ENCODE measurements at regions of chr13 and their contacts with region 1.

Region 1: DNA sequence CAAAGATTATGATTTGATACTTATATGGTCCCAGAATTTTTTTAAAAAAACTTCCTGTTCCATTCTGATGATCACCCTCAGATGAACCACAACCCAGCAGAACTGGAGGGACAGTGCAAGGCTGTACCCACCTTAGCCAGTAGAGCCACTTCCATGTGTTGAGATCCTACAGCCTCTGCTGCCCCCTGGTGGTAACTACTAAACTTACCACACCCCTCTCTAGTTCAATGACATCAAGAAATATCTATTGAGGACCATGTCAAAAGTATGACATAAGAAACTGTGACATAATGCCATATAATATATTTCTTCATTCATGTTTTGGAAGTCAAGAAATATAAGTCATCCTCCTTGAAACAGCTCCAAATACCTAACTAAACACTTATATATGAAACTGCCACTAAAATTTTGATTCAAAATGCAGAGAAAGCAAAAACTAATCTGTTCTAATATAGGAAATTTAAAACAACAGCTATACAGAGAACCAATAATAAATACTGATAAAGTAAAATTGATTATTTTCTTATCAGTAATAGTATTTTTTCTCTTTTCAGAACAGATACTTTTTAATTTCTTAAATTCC is 412.6 kb downstream of the KCTD12 start:
- DNase-seq: peak; percentile 61 to 76 (median 65)
- ATAC-seq: peak; percentile 93 to 98 (median 96)
- H3K4me3 ChIP-seq: no peak overlapping the region
- H3K27ac ChIP-seq: peak overlapping the region in 1 of 12 donors; percentile 40
- H3K4me1 ChIP-seq: peaks cover 0 to 11% (median 2%) of the 10 kb centered on the region in 12 donors
- H3K27me3 ChIP-seq: no peaks in the 10 kb centered on the region
- CTCF ChIP-seq: peak; percentile 77 to 92 (median 87)
- POLR2A ChIP-seq: no peak

Region 2: DNA sequence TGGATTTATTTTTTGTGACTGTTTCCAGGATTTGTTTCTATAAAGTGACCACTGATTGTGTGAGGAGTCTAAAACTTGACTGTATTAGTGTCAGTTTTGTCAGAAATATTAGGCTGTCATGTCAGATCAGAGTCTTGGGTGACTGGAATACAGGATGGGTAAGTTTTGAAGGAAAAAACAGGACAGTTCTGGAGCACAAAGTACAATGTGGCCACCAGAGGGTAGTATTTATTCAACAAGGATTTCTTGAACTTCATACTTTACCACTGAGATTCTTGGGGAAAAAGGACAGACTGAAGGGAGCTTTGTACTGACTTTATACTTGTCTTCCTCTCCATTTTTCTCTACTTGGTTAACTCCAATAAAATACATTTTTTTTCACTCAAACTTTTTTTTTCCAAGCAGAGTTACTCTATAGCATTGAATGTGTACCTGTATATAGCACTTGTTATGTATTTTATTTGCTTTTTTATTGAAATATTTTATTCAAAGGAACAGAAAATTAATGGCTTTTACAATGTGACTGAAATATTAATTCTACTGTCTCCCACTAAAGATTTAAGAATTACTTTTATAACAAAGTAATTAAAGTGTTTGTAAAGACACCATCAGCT is 786.4 kb before region 1 on chr13:
- intact Hi-C with region 1: loop called in 8 of 10 experiments (anchors 5 to 10 kb)
- DNase-seq: no peak
- ATAC-seq: peak in 1 of 4 donors; percentile 28
- H3K4me3 ChIP-seq: no peak overlapping the region
- H3K27ac ChIP-seq: no peak overlapping the region
- H3K4me1 ChIP-seq: no peaks in the 10 kb centered on the region
- H3K27me3 ChIP-seq: no peaks in the 10 kb centered on the region
- CTCF ChIP-seq: peak in 11 of 12 donors; percentile 13 to 54 (median 36)
- POLR2A ChIP-seq: no peak

Region 3: GRCh38 chr13:75870397-75870903 is 603.2 kb before region 1 on chr13:
- intact Hi-C with region 1: loop called in 4 of 10 experiments (anchors 2 to 5 kb)
- DNase-seq: no peak
- ATAC-seq: peak in 2 of 4 donors; percentile 29 to 45
- H3K4me3 ChIP-seq: peak overlapping the region in 11 of 12 donors; percentile 10 to 62 (median 45)
- H3K27ac ChIP-seq: no peak overlapping the region
- H3K4me1 ChIP-seq: peaks cover 0 to 8% (median 0%) of the 10 kb centered on the region in 12 donors
- H3K27me3 ChIP-seq: no peaks in the 10 kb centered on the region
- CTCF ChIP-seq: peak; percentile 66 to 84 (median 74)
- POLR2A ChIP-seq: no peak

Region 4: DNA sequence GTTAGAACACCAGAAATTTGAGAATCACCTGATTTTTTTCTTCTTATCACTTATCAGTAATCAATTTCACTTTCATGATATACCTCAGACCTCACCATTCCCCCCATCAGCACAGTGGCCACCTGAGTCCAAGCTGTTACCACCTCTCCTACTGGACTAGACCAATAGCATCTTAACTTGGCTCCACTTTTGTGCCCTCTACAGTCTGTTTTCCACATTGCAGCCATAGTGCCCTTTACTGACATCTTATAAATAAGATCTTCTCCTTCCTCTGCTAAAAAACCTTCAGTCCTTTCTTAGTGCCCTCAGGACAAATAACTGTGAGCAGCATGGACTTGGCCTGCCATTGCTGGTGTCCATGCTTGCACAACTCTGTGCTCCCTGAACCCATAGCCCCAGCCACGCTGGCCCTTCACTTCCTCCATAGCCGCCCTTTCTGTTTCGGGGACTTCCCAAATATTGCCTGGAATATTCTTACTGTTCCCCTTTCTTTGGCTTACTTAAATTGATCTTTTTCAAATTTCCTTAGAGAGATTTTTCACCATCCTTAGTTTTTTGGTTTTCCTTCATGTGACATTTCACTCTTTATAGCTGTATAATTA is 456.7 kb before region 1 on chr13:
- intact Hi-C with region 1: loop called in 3 of 10 experiments (anchors 5 to 10 kb)
- DNase-seq: no peak
- ATAC-seq: peak in 1 of 4 donors; percentile 46
- H3K4me3 ChIP-seq: no peak overlapping the region
- H3K27ac ChIP-seq: no peak overlapping the region
- H3K4me1 ChIP-seq: peaks cover 0 to 21% (median 8%) of the 10 kb centered on the region in 12 donors
- H3K27me3 ChIP-seq: no peaks in the 10 kb centered on the region
- CTCF ChIP-seq: peak in 11 of 12 donors; percentile 17 to 53 (median 33)
- POLR2A ChIP-seq: no peak

Region 5: GRCh38 chr13:76225815-76226489 is 247.7 kb before region 1 on chr13:
- intact Hi-C with region 1: loop called in 8 of 10 experiments (anchors 2 to 10 kb)
- DNase-seq: peak; percentile 42 to 77 (median 52)
- ATAC-seq: peak; percentile 91 to 97 (median 95)
- H3K4me3 ChIP-seq: no peak overlapping the region
- H3K27ac ChIP-seq: peak overlapping the region in 2 of 12 donors; percentile 22 to 46
- H3K4me1 ChIP-seq: peaks cover 0 to 14% (median 3%) of the 10 kb centered on the region in 12 donors
- H3K27me3 ChIP-seq: no peaks in the 10 kb centered on the region
- CTCF ChIP-seq: no peak
- POLR2A ChIP-seq: no peak

Region 6: GRCh38 chr13:76903544-76904162 is 430.0 kb after region 1 on chr13:
- intact Hi-C with region 1: loop called (anchors 2 to 10 kb)
- DNase-seq: peak; percentile 47 to 67 (median 54)
- ATAC-seq: peak; percentile 64 to 83 (median 79)
- H3K4me3 ChIP-seq: no peak overlapping the region
- H3K27ac ChIP-seq: no peak overlapping the region
- H3K4me1 ChIP-seq: no peaks in the 10 kb centered on the region
- H3K27me3 ChIP-seq: peaks cover 0 to 3% (median 0%) of the 10 kb centered on the region in 9 donors
- CTCF ChIP-seq: peak; percentile 95 to 100 (median 99)
- POLR2A ChIP-seq: no peak